ENCODE measurements at regions of chr11 and their contacts with region 1.

Region 1: GRCh38 chr11:19561011-19561410 is 151.6 kb upstream of the NAV2 start:
- DNase-seq: no peak
- H3K4me3 Mint-ChIP-seq: no peak overlapping the region
- H3K27ac Mint-ChIP-seq: no peak overlapping the region
- H3K4me1 Mint-ChIP-seq: no peaks in the 10 kb centered on the region
- H3K27me3 Mint-ChIP-seq: peaks cover 8% of the 10 kb centered on the region

Region 2: DNA sequence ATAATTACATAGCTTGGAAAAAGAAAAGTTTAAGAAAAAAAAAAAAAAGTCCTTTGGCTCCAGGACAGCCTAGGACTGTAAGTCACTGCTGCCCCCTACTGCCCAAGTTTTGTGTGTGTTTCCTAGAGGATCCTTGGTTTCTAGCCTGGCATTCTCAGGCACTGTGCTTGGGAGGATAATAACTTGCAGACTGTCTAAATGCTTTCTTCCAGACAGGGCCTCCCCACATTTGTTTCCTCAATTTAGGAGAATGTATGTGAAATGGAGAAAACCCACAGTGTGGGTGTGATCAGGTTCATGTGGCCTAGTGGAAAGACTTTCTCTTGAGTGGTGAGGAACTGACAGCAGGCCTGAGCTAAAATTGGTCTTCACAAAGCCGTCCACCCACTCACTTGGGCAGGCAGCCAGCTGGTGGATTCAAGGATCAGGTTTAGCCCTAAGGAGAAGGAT is 342.6 kb after region 1 on chr11:
- intact Hi-C with region 1: loop called (anchors 1 kb)
- DNase-seq: peak; percentile 79
- H3K4me3 Mint-ChIP-seq: no peak overlapping the region
- H3K27ac Mint-ChIP-seq: no peak overlapping the region
- H3K4me1 Mint-ChIP-seq: no peaks in the 10 kb centered on the region
- H3K27me3 Mint-ChIP-seq: peaks cover 2% of the 10 kb centered on the region